ENCODE measurements at regions of chr3 and their contacts with region 1.

Region 1: GRCh38 chr3:58305882-58306711 is at the starts of genes HTD2 and RPP14:
- DNase-seq: peak; percentile 92
- ATAC-seq: peak; percentile 93
- H3K4me3 ChIP-seq: peak within 1 kb of the TSS; percentile 70 to 95 (median 93)
- H3K27ac ChIP-seq: peak within 1 kb of the TSS; percentile 93
- H3K4me1 ChIP-seq: peaks cover 28% of the 10 kb centered on the region
- H3K27me3 ChIP-seq: peaks cover 0 to 3% of the 10 kb centered on the region in 2 experiments; a peak in 1 of 5 replicates
- CTCF ChIP-seq: peak; percentile 97
- EP300 ChIP-seq: peak in 1 of 2 experiments; percentile 26; a peak in 1 of 4 replicates
- POLR2A ChIP-seq: peak; percentile 70 to 73
- RAD21 ChIP-seq: peak; percentile 44
- total RNA-seq, gene HTD2: 13.7 and 20.1 TPM in 2 replicates
- total RNA-seq, gene RPP14: 15.4 and 21.5 TPM in 2 replicates

Region 2: DNA sequence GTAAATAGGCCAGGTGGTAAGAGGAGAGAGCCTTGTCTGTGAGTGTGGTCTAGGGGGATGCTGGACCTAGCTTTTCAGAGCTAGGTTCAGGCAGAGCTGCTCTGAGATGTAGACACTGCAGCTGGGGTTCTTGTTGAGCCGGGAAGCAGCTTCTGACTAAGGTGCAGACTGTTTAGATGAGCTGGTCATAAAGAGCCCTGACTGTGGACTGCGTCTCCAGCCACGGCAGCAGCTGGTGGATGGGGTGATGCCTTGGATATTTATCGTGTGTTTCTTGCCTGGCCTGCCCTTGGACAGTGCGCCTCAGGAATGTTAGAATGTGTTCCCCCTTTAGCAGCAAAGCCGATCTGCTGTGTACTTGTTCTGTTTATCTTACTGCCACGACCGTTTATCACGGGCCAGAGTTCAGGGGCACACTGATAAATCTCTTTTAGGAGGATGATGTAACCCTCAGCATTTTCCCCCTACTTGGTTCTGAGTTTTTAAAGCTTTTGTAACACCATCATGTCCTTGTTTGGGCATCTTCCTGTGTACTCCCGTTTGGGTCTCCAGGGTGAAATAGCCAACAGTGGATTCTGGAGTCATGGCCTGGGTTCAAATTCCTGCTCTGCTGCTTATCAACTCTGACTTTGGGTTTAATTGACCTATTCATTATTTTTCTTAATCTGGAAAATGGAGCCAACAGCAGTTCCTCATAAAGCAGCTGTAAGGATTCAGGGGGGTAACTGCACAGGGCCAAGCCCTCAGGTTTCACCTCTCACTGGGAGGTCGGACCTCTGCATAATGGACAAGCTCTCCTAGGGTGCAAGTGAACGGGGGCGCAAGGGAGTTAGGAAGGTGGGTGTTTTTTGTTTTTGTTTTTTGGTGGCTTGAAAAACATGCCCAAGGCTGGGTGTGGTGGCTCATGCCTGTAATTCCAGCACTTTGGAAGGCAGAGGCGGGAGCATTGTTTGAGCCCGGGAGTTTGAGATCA is 246.5 kb before region 1 on chr3:
- CTCF ChIA-PET with region 1: no interaction called
- POLR2A ChIA-PET with region 1: no interaction called
- in situ Hi-C with region 1: no loop called
- intact Hi-C with region 1: no loop called
- DNase-seq: peak; percentile 99
- ATAC-seq: peak; percentile 96
- H3K4me3 ChIP-seq: peak overlapping the region in 1 of 3 experiments; percentile 31; a peak in 2 of 6 replicates
- H3K27ac ChIP-seq: peak overlapping the region; percentile 94
- H3K4me1 ChIP-seq: peaks cover 92% of the 10 kb centered on the region
- H3K27me3 ChIP-seq: no peaks in the 10 kb centered on the region; a peak in 1 of 5 replicates
- CTCF ChIP-seq: 0 out of 2 replicates have a peak, but pooled peaks have one; percentile 16
- EP300 ChIP-seq: peak; percentile 95 to 99
- POLR2A ChIP-seq: peak; percentile 15 to 88; a peak in 3 of 4 replicates
- RAD21 ChIP-seq: peak; percentile 44; the same call in 1 of the 2 replicates

Region 3: DNA sequence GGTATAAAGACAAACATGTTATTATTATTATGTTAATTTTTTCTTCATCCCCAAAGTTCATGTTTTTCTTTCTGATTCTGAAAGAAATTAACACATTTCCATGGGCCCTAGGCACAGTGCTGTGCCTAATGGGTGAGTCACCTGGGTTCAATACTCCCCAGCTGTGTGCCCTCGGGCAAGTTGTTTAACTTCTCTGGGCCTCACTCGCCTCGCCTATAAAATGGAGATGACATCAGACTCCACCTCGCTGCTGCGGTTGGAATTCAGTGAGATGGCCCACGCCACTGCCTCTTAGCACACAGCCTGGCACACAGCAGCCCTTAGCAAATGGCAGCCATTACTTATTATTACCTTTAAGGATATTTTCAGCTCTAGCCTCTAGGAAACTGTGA is 117.9 kb before region 1 on chr3:
- CTCF ChIA-PET with region 1: interaction called, 10 read pairs
- POLR2A ChIA-PET with region 1: interaction called, 28 read pairs
- in situ Hi-C with region 1: loop called (anchors 5 kb)
- intact Hi-C with region 1: loop called (anchors 2 kb)
- DNase-seq: no peak
- ATAC-seq: no peak
- H3K4me3 ChIP-seq: no peak overlapping the region
- H3K27ac ChIP-seq: peak overlapping the region; percentile 84
- H3K4me1 ChIP-seq: peaks cover 90% of the 10 kb centered on the region
- H3K27me3 ChIP-seq: no peaks in the 10 kb centered on the region
- CTCF ChIP-seq: no peak
- EP300 ChIP-seq: no peak
- POLR2A ChIP-seq: no peak
- RAD21 ChIP-seq: no peak

Region 4: DNA sequence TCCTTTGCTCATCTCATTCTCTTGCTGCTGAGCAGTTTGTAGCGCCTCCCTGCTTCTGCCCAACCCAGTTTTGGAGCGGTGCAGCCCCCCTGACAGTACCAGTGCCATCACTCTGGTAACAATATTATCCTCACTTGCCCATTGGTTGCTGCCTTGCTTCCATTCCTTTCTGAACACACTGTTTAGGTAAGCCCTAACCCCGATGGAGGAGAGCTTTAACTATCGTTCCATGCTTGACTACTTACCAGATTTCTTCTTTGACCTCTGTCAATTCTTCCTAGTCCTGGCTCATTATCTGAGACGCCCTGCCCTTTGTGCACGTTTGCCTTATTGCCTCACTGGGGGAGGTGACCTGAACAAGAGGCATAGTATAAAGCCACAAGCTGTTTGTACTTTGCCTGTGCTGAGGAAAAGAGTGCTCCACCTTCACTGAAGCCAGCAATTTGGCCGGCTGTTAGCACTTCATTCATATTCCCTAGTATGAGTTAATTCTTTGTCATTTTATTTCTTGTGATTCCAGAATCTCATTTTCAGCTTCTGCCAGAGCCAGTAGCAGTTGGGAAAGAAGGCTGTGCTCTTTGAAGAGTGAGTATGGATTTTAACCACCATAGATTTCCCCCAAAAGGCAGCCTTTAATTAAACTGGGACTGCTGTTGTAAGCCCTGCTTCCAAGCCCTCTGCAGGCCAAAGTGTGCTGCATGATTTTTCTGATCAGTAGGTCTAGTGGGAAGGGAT is 56.6 kb before region 1 on chr3:
- CTCF ChIA-PET with region 1: no interaction called
- POLR2A ChIA-PET with region 1: interaction called, 11 read pairs
- in situ Hi-C with region 1: no loop called
- intact Hi-C with region 1: no loop called
- DNase-seq: peak; percentile 78
- ATAC-seq: peak; percentile 93
- H3K4me3 ChIP-seq: peak overlapping the region; percentile 7 to 22 (median 22); a peak in 3 of 6 replicates
- H3K27ac ChIP-seq: peak overlapping the region; percentile 67
- H3K4me1 ChIP-seq: peaks cover 59% of the 10 kb centered on the region
- H3K27me3 ChIP-seq: no peaks in the 10 kb centered on the region
- CTCF ChIP-seq: no peak
- EP300 ChIP-seq: peak in 1 of 2 experiments; percentile 57; a peak in 1 of 4 replicates
- POLR2A ChIP-seq: 0 out of 4 replicates have a peak, but pooled peaks of 1 of the 2 experiments have one; percentile 35
- RAD21 ChIP-seq: no peak

Region 5: GRCh38 chr3:58324391-58325390 is 18.6 kb after region 1 on chr3:
- CTCF ChIA-PET with region 1: no interaction called
- POLR2A ChIA-PET with region 1: interaction called, 18 read pairs
- in situ Hi-C with region 1: no loop called
- intact Hi-C with region 1: no loop called
- DNase-seq: no peak
- ATAC-seq: no peak
- H3K4me3 ChIP-seq: peak overlapping the region in 1 of 3 experiments; percentile 26; a peak in 1 of 6 replicates
- H3K27ac ChIP-seq: no peak overlapping the region
- H3K4me1 ChIP-seq: peaks cover 54% of the 10 kb centered on the region
- H3K27me3 ChIP-seq: no peaks in the 10 kb centered on the region
- CTCF ChIP-seq: no peak
- EP300 ChIP-seq: no peak
- POLR2A ChIP-seq: no peak
- RAD21 ChIP-seq: no peak

Region 6: GRCh38 chr3:58414538-58415197 is 108.6 kb after region 1 on chr3:
- CTCF ChIA-PET with region 1: interaction called, 5 read pairs
- POLR2A ChIA-PET with region 1: interaction called, 6 read pairs
- in situ Hi-C with region 1: no loop called
- intact Hi-C with region 1: loop called (anchors 5 kb)
- DNase-seq: peak; percentile 38
- ATAC-seq: peak; percentile 32; the same call in 1 of the 3 replicates
- H3K4me3 ChIP-seq: no peak overlapping the region
- H3K27ac ChIP-seq: no peak overlapping the region
- H3K4me1 ChIP-seq: peaks cover 22% of the 10 kb centered on the region
- H3K27me3 ChIP-seq: no peaks in the 10 kb centered on the region
- CTCF ChIP-seq: peak; percentile 68
- EP300 ChIP-seq: no peak
- POLR2A ChIP-seq: no peak
- RAD21 ChIP-seq: peak; percentile 60

Region 7: DNA sequence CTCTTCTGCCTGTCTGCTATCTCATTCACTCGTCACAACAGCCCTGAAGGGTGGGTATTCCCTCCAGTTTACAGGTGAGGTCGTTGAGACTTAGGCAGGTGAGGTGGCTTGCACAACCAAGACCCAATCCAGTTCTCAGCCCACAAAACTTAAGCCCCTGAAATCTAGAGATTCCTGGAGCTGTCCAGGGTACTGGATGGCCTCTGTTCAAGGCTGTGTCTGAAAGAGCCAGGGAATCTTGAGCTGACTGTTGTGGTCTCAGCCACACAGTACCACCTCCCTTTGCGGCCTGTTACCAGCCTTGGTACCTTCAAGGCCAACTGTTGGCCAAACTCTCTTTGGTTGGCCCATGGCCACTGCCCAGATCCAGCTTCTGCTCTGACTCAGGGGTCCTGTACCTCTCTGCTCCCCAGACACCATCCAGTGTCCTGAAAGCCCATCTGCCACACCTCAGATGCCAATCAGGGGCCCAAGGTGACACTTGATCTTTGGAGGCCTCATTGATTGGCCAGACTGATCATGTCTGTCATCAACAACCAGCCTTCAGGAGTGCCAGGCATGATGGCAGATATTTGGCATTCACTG is 282.0 kb after region 1 on chr3:
- CTCF ChIA-PET with region 1: no interaction called
- POLR2A ChIA-PET with region 1: no interaction called
- in situ Hi-C with region 1: no loop called
- intact Hi-C with region 1: no loop called
- DNase-seq: no peak
- ATAC-seq: no peak
- H3K4me3 ChIP-seq: no peak overlapping the region
- H3K27ac ChIP-seq: no peak overlapping the region
- H3K4me1 ChIP-seq: peaks cover 14% of the 10 kb centered on the region
- H3K27me3 ChIP-seq: peaks cover 0 to 9% of the 10 kb centered on the region in 2 experiments; a peak in 3 of 5 replicates
- CTCF ChIP-seq: no peak
- EP300 ChIP-seq: no peak
- POLR2A ChIP-seq: no peak
- RAD21 ChIP-seq: no peak

Measured in HepG2 (cell line).